Ascending aorta (tissue), 2 donors: ENCODE measurements at regions of chr2 and their contacts with region 1.

Region 1: GRCh38 chr2:96527286-96528005 is 9.1 kb upstream of the ARID5A start:
- DNase-seq: peak in 1 of 2 donors; percentile 86
- H3K4me3 ChIP-seq: peak overlapping the region; percentile 68 to 69
- H3K27ac ChIP-seq: peak overlapping the region; percentile 96 to 99
- H3K4me1 ChIP-seq: peaks cover 30 to 50% of the 10 kb centered on the region in 2 donors
- H3K27me3 ChIP-seq: no peaks in the 10 kb centered on the region
- CTCF ChIP-seq: peak in 2 of 3 experiments; percentile 49 to 56

Region 2: GRCh38 chr2:94890234-94890633 is 1637.2 kb before region 1 on chr2:
- intact Hi-C with region 1: no loop called
- DNase-seq: no peak
- H3K4me3 ChIP-seq: no peak overlapping the region
- H3K27ac ChIP-seq: no peak overlapping the region
- H3K4me1 ChIP-seq: no peaks in the 10 kb centered on the region
- H3K27me3 ChIP-seq: no peaks in the 10 kb centered on the region
- CTCF ChIP-seq: no peak

Region 3: DNA sequence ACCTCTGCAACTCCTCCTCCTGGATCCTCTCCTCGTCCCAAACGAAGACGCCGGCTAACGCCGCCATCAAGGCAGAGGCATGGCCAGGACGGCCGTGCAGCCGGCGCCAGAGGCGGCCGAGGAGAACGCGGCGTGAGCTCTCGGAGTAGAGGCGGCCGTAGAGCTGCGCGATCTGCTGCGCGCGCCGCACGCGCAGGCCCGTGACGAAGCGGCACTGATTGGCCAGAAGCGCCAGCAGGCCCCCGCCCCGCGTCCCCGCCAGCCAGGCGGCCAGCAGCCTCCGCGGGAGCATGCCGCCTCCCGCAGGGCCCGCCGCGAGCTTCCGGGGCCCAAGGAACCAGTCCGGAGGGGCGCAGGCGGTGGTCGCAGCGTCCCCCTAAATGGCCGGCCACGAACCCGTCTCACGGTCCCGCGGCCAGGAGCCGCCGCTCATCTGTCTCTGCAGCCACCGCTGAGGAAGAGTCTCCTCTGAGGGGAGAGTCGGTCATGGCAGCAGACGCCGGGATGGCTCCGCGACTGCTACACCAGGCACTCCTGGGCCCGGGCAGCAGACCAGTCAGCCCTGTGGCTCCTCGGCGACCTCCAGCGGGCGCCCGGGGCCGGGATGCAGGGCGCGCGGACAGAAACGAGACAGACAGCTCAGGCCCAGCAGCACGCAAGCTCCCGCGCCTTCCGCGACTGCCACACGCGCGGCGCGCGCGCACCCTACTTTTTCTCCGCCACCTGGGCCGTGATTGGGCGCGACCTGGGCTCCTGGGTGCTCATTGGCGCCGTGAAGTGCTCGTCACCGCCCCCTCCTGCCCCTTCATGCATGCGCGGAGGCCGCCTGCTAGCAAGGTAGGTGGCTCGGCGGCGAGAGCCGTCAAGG is 319.1 kb before region 1 on chr2 and contains the start of gene STARD7:
- intact Hi-C with region 1: loop called (anchors 5 kb)
- DNase-seq: peak; percentile 93 to 99
- H3K4me3 ChIP-seq: peak within 1 kb of the TSS; percentile 92 to 99
- H3K27ac ChIP-seq: peak within 1 kb of the TSS; percentile 92 to 97
- H3K4me1 ChIP-seq: peaks cover 12 to 39% of the 10 kb centered on the region in 2 donors
- H3K27me3 ChIP-seq: no peaks in the 10 kb centered on the region
- CTCF ChIP-seq: peak in 1 of 3 experiments; percentile 3
- total RNA-seq, gene STARD7: 85.6 TPM

Region 4: DNA sequence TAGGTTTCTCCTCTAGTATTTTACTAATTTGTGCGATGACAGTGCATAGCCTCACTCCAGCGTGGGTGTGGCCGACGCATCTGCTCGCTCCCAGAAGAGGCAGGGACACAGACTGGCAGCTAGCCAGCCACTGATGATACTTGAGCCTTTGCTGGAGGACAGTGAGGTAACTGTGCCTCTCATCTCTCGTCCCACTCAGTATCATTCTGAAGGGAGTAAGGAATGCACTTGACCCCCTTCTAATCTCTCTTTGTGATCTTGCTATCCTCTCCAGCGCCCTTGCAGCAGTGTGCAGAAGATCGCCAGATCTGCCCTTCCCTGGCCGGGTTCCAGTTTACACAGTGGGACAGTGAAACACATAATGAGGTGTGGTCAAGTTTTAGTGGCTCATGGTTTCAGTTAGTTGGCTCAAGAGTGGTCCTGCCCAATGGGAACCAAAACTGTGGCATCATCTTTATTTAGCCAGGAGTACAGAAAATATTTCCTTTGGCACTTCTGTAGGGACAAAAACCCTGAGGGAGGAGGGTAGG is 174.3 kb before region 1 on chr2:
- intact Hi-C with region 1: loop called (anchors 5 kb)
- DNase-seq: peak in 1 of 2 donors; percentile 82
- H3K4me3 ChIP-seq: peak overlapping the region; percentile 4 to 37
- H3K27ac ChIP-seq: peak overlapping the region; percentile 78 to 84
- H3K4me1 ChIP-seq: peaks cover 0 to 19% of the 10 kb centered on the region in 2 donors
- H3K27me3 ChIP-seq: no peaks in the 10 kb centered on the region
- CTCF ChIP-seq: no peak

Region 5: GRCh38 chr2:96541398-96542152 is 14.1 kb after region 1 on chr2:
- intact Hi-C with region 1: loop called (anchors 2 kb)
- DNase-seq: no peak
- H3K4me3 ChIP-seq: peak overlapping the region in 1 of 2 donors; percentile 83
- H3K27ac ChIP-seq: peak overlapping the region in 1 of 2 donors; percentile 37
- H3K4me1 ChIP-seq: peaks cover 12 to 43% of the 10 kb centered on the region in 2 donors
- H3K27me3 ChIP-seq: no peaks in the 10 kb centered on the region
- CTCF ChIP-seq: no peak

Region 6: GRCh38 chr2:96554293-96555145 is 27.1 kb after region 1 on chr2:
- intact Hi-C with region 1: loop called (anchors 1 kb)
- DNase-seq: peak in 1 of 2 donors; percentile 89
- H3K4me3 ChIP-seq: peak overlapping the region in 1 of 2 donors; percentile 43
- H3K27ac ChIP-seq: peak overlapping the region in 1 of 2 donors; percentile 20
- H3K4me1 ChIP-seq: peaks cover 0 to 3% of the 10 kb centered on the region in 2 donors
- H3K27me3 ChIP-seq: no peaks in the 10 kb centered on the region
- CTCF ChIP-seq: peak; percentile 96 to 98 (median 98)

Region 7: GRCh38 chr2:96565111-96565510 is 37.7 kb after region 1 on chr2:
- intact Hi-C with region 1: no loop called
- DNase-seq: no peak
- H3K4me3 ChIP-seq: no peak overlapping the region
- H3K27ac ChIP-seq: no peak overlapping the region
- H3K4me1 ChIP-seq: no peaks in the 10 kb centered on the region
- H3K27me3 ChIP-seq: no peaks in the 10 kb centered on the region
- CTCF ChIP-seq: no peak